AG04450 (cell line): ENCODE measurements at regions of chr20 and their contacts with region 1.

Region 1: GRCh38 chr20:49982346-49983122 is at the start of gene SNAI1:
- DNase-seq: peak; percentile 73
- H3K4me3 ChIP-seq: peak within 1 kb of the TSS; percentile 93
- H3K27ac ChIP-seq: peak within 1 kb of the TSS; percentile 39
- H3K27me3 ChIP-seq: peaks cover 6% of the 10 kb centered on the region
- CTCF ChIP-seq: peak; percentile 45
- polyA plus RNA-seq, gene SNAI1: 2.3 and 3.5 TPM in 2 replicates

Region 2: GRCh38 chr20:49541733-49542513 is 440.6 kb before region 1 on chr20:
- CTCF ChIA-PET with region 1: no interaction called
- POLR2A ChIA-PET with region 1: no interaction called
- DNase-seq: peak; percentile 39
- H3K4me3 ChIP-seq: no peak overlapping the region
- H3K27ac ChIP-seq: no peak overlapping the region
- H3K27me3 ChIP-seq: peaks cover 5% of the 10 kb centered on the region
- CTCF ChIP-seq: peak; percentile 75

Region 3: DNA sequence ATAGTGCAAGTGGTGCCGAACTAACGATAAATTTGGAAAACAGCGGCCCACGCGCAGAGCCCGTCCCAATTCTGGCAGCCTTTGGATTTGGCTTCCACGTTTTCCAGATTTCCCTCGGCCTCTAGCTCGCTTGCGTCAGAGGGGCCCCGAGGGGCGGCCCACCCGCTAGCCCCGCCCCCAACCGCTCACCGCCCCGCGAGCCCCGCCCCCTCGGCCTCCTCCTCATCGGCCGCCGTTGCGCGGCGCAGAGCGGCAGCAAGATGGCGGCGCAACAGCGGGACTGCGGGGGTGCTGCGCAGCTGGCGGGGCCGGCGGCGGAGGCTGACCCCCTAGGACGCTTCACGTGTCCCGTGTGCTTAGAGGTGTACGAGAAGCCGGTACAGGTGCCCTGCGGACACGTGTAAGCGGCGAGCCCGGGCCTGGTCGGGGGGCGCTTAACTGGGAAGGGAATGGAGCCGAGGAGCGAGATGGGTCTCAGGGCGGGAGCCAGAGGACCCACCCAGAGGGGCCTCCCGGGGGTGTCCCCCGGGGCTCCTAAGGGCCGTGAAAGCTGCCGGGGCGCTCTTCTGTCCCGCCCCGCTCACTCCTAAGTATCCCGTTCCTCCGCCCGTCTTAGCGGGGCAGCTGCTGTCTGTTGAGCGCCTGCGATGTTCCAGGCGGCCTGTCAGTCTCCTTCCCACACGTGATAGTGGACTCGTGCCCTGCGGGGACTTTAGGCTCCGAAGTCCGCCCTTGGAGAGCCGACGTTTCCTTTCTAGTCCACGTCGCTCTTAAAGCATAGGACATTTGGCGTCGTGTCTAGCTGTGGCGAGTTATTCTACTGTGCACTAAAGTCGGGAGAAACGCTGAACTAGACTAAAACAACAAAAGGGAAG is 46.1 kb before region 1 on chr20 and contains the start of gene RNF114:
- CTCF ChIA-PET with region 1: interaction called, 14 read pairs
- POLR2A ChIA-PET with region 1: no interaction called
- DNase-seq: peak; percentile 67
- H3K4me3 ChIP-seq: peak within 1 kb of the TSS; percentile 96
- H3K27ac ChIP-seq: peak within 1 kb of the TSS; percentile 81
- H3K27me3 ChIP-seq: no peaks in the 10 kb centered on the region
- CTCF ChIP-seq: no peak
- polyA plus RNA-seq, gene RNF114: 69.6 and 87.4 TPM in 2 replicates

Region 4: GRCh38 chr20:49964964-49965780 is 17.4 kb before region 1 on chr20:
- CTCF ChIA-PET with region 1: interaction called, 34 read pairs
- POLR2A ChIA-PET with region 1: interaction called, 3 read pairs
- DNase-seq: no peak
- H3K4me3 ChIP-seq: no peak overlapping the region
- H3K27ac ChIP-seq: no peak overlapping the region
- H3K27me3 ChIP-seq: no peaks in the 10 kb centered on the region
- CTCF ChIP-seq: peak; percentile 58

Region 5: GRCh38 chr20:50085452-50086365 is 103.2 kb after region 1 on chr20:
- CTCF ChIA-PET with region 1: interaction called, 51 read pairs
- POLR2A ChIA-PET with region 1: interaction called, 8 read pairs
- DNase-seq: peak; percentile 27
- H3K4me3 ChIP-seq: no peak overlapping the region
- H3K27ac ChIP-seq: peak overlapping the region; percentile 3
- H3K27me3 ChIP-seq: no peaks in the 10 kb centered on the region
- CTCF ChIP-seq: peak; percentile 84

Region 6: GRCh38 chr20:50115591-50116372 is 133.2 kb after region 1 on chr20:
- CTCF ChIA-PET with region 1: interaction called, 13 read pairs
- POLR2A ChIA-PET with region 1: interaction called, 6 read pairs
- DNase-seq: peak; percentile 92
- H3K4me3 ChIP-seq: peak overlapping the region; percentile 65
- H3K27ac ChIP-seq: peak overlapping the region; percentile 31
- H3K27me3 ChIP-seq: no peaks in the 10 kb centered on the region
- CTCF ChIP-seq: no peak

Region 7: DNA sequence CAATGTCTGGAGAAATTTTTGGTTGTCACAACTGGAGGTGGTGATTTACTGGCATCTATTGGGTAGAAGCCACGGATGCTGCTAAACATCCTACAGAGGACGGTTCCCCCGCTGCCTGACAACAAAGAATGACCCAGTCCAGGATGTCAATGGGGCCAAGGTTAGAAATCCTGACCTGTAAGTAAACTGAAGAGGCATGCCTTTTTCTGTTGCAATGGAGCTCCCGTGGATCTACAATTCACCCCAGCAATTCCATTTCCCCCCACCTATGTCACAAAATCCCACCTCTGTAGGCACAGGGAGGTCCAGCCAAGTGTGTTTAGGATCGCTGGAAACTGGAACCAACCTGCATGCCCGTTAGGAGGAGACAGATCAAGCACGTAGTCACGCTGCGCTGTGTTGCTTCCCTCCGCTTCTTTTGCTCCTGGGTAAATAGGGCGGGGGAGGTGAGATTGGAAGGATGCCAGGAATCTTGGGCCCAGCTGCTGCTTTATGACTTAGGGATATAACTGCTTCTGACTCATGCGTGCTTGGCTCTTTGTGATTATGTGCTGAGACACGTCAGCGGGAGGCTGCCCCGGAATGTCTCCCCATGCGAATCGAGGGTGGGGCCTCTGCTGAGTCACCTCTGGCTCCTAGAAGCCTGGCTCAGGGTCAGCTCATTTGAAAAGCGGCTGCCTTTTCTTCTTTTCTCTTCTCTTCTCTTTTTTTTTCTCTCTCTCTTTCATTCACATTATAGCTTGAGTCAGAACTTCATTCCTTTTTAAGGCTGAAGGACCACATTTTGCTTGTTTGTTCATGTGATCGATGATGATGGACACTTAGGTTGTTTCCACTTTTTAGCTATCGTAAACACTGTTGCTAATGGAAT is 183.4 kb after region 1 on chr20:
- CTCF ChIA-PET with region 1: interaction called, 37 read pairs
- POLR2A ChIA-PET with region 1: no interaction called
- DNase-seq: peak; percentile 100
- H3K4me3 ChIP-seq: peak overlapping the region; percentile 66
- H3K27ac ChIP-seq: peak overlapping the region; percentile 98
- H3K27me3 ChIP-seq: no peaks in the 10 kb centered on the region
- CTCF ChIP-seq: 0 out of 2 replicates have a peak, but pooled peaks have one; percentile 14

Region 8: GRCh38 chr20:50179507-50180016 is 197.0 kb after region 1 on chr20:
- CTCF ChIA-PET with region 1: interaction called, 19 read pairs
- POLR2A ChIA-PET with region 1: no interaction called
- DNase-seq: no peak
- H3K4me3 ChIP-seq: no peak overlapping the region
- H3K27ac ChIP-seq: no peak overlapping the region
- H3K27me3 ChIP-seq: no peaks in the 10 kb centered on the region
- CTCF ChIP-seq: no peak

Region 9: GRCh38 chr20:50208085-50208491 is 225.6 kb after region 1 on chr20:
- CTCF ChIA-PET with region 1: no interaction called
- POLR2A ChIA-PET with region 1: no interaction called
- DNase-seq: no peak
- H3K4me3 ChIP-seq: no peak overlapping the region
- H3K27ac ChIP-seq: no peak overlapping the region
- H3K27me3 ChIP-seq: no peaks in the 10 kb centered on the region
- CTCF ChIP-seq: no peak